HCT116 (cell line): ENCODE measurements at regions of chr2 and their contacts with region 1.

Region 1: GRCh38 chr2:3303583-3304406 is 73.8 kb downstream of the EIPR1 start:
- DNase-seq: peak; percentile 28
- ATAC-seq: peak; percentile 99
- H3K4me3 ChIP-seq: no peak overlapping the region
- H3K27ac ChIP-seq: no peak overlapping the region
- H3K4me1 ChIP-seq: peaks cover 3 to 8% of the 10 kb centered on the region in 2 experiments; a peak in 2 of 4 replicates
- H3K27me3 ChIP-seq: no peaks in the 10 kb centered on the region
- CTCF ChIP-seq: peak; percentile 67 to 92 (median 86)
- POLR2A ChIP-seq: no peak
- RAD21 ChIP-seq: peak; percentile 79

Region 2: DNA sequence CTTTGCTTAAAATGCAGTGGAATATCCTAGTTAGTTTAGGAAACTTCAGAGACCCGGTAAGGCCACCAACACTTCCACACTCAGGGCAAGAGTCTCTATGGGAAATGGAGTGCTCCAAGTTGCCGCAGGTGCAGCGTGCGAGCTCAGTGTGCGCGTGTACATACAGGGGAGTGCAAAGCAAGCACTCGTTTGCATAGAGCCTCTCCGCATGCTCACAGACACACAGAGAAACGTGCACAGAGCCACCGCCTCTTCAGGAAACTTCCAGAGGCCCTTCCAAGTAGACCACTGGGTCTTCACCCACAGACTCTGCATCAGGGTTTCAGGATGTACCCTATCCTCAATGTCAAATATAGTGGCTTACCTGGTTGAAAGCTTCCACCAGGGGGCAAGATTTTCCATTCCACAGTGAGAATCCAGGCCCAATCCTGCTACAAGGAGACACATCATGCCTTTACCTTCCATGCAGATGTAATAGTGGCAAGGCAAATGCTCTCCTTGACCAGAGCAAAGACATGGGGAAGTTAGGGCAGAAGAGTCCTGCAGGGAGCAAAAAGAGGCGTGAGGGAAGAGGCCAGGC is 459.7 kb before region 1 on chr2:
- CTCF ChIA-PET with region 1: no interaction called
- POLR2A ChIA-PET with region 1: no interaction called
- RAD21 ChIA-PET with region 1: no interaction called
- intact Hi-C with region 1: loop called (anchors 5 kb)
- DNase-seq: peak; percentile 7
- ATAC-seq: peak; percentile 69
- H3K4me3 ChIP-seq: no peak overlapping the region
- H3K27ac ChIP-seq: no peak overlapping the region
- H3K4me1 ChIP-seq: peaks cover 11 to 12% of the 10 kb centered on the region in 2 experiments; a peak in 3 of 4 replicates
- H3K27me3 ChIP-seq: peaks cover 3% of the 10 kb centered on the region; the same call in 1 of the 2 replicates
- CTCF ChIP-seq: peak; percentile 29 to 57 (median 54); a peak in 4 of 6 replicates
- POLR2A ChIP-seq: no peak
- RAD21 ChIP-seq: peak; percentile 52

Region 3: DNA sequence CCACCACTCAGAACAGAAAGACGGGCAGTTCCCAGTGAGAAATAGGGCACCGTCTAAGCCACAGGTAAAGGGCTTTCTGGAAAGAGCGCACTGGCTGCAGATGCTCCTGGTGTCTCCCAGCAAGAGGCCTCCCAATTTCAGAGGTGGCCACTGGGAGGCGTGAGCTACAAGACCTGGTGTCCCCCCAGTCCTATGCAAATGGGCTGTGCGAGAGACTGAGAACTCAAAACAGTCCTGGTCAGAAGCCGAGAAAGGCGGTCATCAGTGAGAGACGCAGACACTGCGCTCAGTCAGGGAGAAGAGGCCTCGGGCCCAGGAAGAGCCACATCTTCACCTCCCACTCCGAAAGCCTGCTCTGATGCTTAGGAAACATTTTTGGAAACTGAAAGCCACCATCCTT is 105.7 kb before region 1 on chr2:
- CTCF ChIA-PET with region 1: no interaction called
- POLR2A ChIA-PET with region 1: no interaction called
- RAD21 ChIA-PET with region 1: no interaction called
- intact Hi-C with region 1: loop called (anchors 5 kb)
- DNase-seq: no peak
- ATAC-seq: peak; percentile 80
- H3K4me3 ChIP-seq: no peak overlapping the region
- H3K27ac ChIP-seq: no peak overlapping the region
- H3K4me1 ChIP-seq: no peaks in the 10 kb centered on the region
- H3K27me3 ChIP-seq: no peaks in the 10 kb centered on the region
- CTCF ChIP-seq: peak in 2 of 3 experiments; percentile 33 to 34; a peak in 2 of 6 replicates
- POLR2A ChIP-seq: no peak
- RAD21 ChIP-seq: peak; percentile 27; the same call in 1 of the 2 replicates

Region 4: GRCh38 chr2:3334392-3335345 is 30.9 kb after region 1 on chr2:
- CTCF ChIA-PET with region 1: no interaction called
- POLR2A ChIA-PET with region 1: no interaction called
- RAD21 ChIA-PET with region 1: no interaction called
- intact Hi-C with region 1: no loop called
- DNase-seq: no peak
- ATAC-seq: no peak
- H3K4me3 ChIP-seq: no peak overlapping the region
- H3K27ac ChIP-seq: no peak overlapping the region
- H3K4me1 ChIP-seq: no peaks in the 10 kb centered on the region
- H3K27me3 ChIP-seq: no peaks in the 10 kb centered on the region
- CTCF ChIP-seq: no peak
- POLR2A ChIP-seq: no peak
- RAD21 ChIP-seq: no peak

Region 5: DNA sequence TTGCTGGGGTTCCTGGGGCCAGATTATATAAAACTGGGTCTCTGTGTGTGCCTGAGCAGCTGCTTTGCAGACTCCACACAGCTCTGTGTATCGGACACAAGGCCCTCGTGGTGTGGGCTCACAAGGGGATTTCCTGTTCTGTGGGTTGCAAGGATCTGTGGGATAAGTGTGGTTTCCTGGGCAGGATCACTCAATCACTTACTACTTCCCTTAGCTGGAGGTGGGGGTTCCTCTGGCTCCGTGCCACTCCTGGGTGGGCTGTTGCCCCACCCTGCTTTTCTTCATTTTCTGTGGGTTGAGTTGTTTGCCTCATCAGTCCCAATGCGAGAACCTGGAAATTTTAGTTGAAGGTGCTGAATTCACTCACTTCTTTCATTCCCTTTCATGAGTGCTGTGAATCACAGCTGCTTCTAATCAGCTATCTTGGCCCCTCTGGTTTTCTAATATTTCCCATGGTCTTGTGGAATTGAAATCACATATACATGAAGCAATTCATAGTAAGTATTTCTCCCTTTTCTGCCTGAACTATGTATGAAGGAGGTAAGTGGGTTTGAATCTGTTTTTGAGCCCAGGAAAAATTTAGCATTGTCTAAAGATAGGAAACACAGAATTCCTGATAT is 595.9 kb after region 1 on chr2:
- CTCF ChIA-PET with region 1: no interaction called
- POLR2A ChIA-PET with region 1: no interaction called
- RAD21 ChIA-PET with region 1: no interaction called
- intact Hi-C with region 1: no loop called
- DNase-seq: no peak
- ATAC-seq: no peak
- H3K4me3 ChIP-seq: no peak overlapping the region
- H3K27ac ChIP-seq: no peak overlapping the region
- H3K4me1 ChIP-seq: no peaks in the 10 kb centered on the region
- H3K27me3 ChIP-seq: no peaks in the 10 kb centered on the region
- CTCF ChIP-seq: no peak
- POLR2A ChIP-seq: no peak
- RAD21 ChIP-seq: no peak